Dorsolateral prefrontal cortex (tissue), 120 donors: ENCODE measurements at regions of chr3 and their contacts with region 1.

Region 1: DNA sequence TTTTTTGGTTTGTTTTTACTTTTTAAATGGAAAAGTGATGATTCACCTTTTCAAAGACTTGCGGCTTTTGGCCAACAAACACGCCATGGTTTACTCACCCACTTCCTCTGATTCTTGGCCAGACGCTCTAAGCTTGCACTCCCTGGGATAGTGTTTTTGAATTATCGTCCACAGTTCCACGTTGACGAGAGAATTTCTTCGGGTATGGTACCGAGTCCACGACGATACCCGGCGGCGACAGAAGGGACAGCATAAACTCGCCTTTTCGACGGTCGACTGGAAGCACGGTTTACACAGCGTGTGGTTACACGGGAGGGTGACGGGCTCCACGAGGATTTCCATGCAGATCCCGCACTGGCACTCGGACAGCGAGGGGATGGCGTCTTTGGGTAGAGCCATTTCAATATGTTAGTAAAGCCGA is 783 bp downstream of the RNF168 start:
- DNase-seq: peak in 9 of 10 donors; percentile 32 to 58 (median 47)
- H3K4me3 ChIP-seq: peak overlapping the region; percentile 63 to 99 (median 90)
- H3K27ac ChIP-seq: peak overlapping the region; percentile 57 to 98 (median 90)
- H3K27me3 ChIP-seq: no peaks in the 10 kb centered on the region
- CTCF ChIP-seq: peak in 1 of 56 donors; percentile 10

Region 2: DNA sequence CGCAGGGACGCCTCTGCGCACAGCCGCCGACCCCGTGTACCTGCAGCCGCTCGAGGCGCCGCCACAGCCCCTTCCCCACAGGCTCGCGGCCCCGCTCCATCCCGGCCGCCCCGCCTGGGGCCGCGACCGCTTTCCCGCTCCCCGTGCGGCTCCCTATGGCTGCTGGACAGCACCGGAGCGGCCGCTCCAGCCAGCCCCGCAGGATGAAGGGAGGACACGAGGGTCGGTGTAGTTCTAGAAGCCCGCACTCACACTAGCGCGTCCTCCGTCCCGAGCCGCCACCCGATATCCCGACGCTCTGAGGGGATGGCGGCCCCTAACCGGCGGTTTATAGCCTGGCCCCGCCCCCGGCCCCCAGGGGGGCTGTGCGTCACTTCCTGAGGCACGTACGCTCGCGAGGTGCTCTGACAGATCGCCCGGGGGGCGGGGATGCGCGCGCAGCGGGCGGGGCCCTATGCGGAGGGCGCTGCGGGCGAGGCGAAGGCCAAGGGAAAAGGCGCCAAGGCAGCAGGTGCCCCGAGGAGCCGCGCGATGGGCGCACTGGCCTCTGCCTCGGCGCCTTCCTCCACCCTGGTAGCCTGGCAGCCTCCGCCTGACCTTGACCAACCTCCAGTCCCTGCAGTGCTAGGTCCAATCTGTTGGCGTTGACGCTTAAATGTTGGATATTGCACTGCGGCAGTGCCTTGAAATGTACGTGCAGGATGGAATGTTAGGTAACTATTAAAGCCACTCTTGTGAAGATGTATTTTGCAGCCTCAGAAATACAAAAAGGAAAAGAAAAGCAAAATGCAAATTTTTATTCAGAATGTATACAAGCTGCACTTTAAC is 420.8 kb before region 1 on chr3 and contains the start of gene TFRC:
- intact Hi-C with region 1: loop called in 1 of 2 experiments (anchors 10 kb)
- DNase-seq: peak; percentile 93 to 98 (median 96)
- H3K4me3 ChIP-seq: peak within 1 kb of the TSS; percentile 80 to 100 (median 97)
- H3K27ac ChIP-seq: peak within 1 kb of the TSS; percentile 61 to 99 (median 97)
- H3K27me3 ChIP-seq: no peaks in the 10 kb centered on the region
- CTCF ChIP-seq: peak in 34 of 56 donors; percentile 5 to 61 (median 32)
- total RNA-seq, gene TFRC: 54.9 to 178 (median 99.8) TPM

Region 3: DNA sequence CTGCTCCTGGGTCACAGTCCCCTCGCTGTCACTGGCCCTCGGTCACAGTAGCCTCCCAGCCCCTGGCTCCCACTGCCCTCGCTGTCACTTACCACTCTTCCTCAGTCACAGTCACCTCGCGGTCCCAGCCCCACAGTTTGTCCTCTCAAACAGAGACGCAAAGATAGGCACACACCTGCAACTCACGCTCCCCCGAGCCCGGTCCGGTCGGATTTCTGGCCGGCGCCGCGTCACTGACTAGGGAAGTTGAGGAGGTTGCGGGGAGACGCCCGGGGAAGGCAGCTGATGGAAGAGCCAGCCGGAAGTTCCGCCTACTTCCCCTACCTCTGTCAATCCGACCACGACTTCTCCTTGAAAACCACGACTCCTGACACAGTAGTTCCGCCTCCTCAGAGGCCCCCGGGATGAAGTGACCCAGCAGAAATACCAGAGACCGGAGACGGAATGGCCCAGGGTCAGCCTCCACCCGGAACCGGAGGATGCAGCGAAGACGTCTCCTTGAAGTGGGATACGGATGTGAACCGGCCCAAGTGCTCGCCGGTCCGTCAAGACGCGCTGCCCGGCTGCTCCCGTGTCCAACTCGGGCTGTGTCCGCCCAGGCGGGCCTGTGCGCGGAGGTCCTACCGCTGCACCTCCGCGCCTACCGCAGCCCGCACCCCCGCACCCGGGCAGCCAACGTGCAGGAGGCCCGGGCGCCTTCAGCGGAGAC is 215.2 kb before region 1 on chr3 and contains the start of gene PCYT1A:
- intact Hi-C with region 1: loop called in 1 of 2 experiments (anchors 1 kb)
- DNase-seq: peak; percentile 65 to 94 (median 89)
- H3K4me3 ChIP-seq: peak within 1 kb of the TSS; percentile 65 to 98 (median 92)
- H3K27ac ChIP-seq: peak within 1 kb of the TSS; percentile 39 to 95 (median 89)
- H3K27me3 ChIP-seq: no peaks in the 10 kb centered on the region
- CTCF ChIP-seq: peak in 13 of 56 donors; percentile 2 to 52 (median 24)
- total RNA-seq, gene PCYT1A: 32.9 to 64.7 (median 46.7) TPM

Region 4: DNA sequence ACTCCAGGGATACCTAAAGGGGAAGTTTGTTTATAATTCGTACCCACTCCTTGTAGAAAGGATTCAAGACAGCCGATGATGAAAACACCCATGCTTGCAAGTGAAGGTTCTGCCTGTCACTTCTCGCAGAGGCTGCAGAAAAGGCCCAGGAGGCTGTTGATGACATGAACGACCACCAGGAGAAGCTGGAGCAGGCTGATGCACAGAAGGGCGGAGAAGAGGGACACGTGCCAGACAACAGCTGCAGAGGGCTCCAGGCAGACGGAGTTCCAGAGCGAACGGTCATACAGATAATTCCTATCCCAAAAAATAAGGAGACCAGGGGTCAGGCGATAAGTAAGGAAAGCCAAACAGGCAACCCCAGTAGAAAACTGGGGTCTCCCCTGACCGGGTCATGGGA is 179.1 kb before region 1 on chr3:
- intact Hi-C with region 1: loop called (anchors 10 kb)
- DNase-seq: no peak
- H3K4me3 ChIP-seq: no peak overlapping the region
- H3K27ac ChIP-seq: no peak overlapping the region
- H3K27me3 ChIP-seq: no peaks in the 10 kb centered on the region
- CTCF ChIP-seq: no peak

Region 5: DNA sequence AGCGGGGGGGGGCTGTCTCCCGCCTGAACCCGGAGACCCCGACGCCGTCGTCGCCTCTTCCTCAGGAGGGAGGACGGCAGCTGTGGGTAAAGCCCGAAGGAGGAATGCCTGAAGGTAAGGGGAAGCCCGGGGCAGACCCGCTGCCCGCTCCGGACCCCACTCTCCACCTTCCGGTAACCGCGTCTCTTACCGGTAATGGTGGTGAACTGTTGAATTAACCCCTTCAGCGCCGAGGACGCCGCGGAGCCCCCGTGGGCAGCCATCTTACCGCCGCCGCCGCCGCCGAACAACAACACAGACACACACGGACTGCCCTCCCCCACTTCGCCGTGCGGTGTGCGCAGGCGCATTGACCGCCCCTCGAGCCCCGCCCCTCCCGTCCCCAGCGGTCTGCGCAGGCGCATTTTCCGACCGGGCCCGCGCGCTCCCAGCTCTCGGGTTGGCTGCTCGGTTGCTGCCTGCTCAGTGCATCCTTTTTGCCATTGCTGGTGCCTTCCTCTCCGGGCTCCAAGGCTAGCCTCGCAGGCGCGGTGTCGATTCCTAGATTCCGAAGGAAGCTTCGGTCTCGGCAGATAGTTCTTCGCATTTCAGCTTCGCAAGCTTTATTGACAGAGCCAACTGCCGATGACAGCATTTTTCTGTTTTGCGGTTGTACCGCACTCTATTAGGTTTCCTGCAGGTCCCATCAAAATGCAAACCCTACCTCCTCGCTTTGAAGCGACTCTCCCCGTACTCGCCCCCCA is 70.5 kb before region 1 on chr3 and contains the start of gene UBXN7:
- intact Hi-C with region 1: loop called (anchors 5 kb)
- DNase-seq: peak; percentile 88 to 95 (median 92)
- H3K4me3 ChIP-seq: peak within 1 kb of the TSS; percentile 75 to 100 (median 97)
- H3K27ac ChIP-seq: peak within 1 kb of the TSS; percentile 65 to 99 (median 96)
- H3K27me3 ChIP-seq: no peaks in the 10 kb centered on the region
- CTCF ChIP-seq: peak in 23 of 56 donors; percentile 5 to 46 (median 21)
- total RNA-seq, gene UBXN7: 60.6 to 105 (median 78.4) TPM

Region 6: DNA sequence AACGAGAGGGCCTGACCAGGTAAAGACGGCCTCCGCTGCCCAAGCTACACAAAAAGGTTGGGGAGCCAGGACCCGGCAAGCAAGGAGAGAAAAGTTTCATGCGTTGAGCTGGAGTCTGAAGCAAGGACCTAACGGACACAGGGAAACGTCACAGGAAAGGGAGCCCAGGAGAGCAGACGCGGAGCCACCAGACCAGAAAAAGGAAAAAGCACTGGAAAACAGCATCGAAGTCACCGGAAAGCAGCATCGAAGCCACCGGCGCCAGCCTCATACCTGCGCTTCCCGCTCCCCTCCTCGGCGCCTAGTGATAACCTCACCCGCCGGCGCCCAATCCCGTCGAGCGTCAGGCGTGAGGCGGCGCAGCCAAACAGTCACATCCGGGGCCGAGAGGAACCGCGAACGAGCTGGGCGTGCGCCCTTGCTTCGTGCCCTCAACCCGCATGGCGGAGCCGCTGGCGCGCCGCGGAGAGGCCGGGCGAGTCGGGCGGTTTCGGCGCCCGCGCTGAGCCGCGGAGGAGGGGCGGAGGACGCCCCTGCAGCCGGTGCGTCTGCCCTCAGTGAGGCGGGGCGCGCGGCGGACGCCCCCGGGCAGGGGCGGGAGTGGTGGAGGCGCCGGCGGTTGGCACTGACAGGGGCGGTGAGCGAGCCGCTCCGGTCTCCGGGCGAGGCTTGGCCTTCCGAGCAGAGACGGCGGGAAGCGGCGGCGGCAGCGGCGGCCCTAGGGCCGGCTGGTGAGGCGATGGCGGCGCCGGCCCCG is 65.6 kb after region 1 on chr3 and contains the starts of genes FBXO45 and WDR53:
- intact Hi-C with region 1: loop called (anchors 2 to 5 kb)
- DNase-seq: peak; percentile 85 to 96 (median 93)
- H3K4me3 ChIP-seq: peak within 1 kb of the TSS; percentile 63 to 100 (median 94)
- H3K27ac ChIP-seq: peak within 1 kb of the TSS in 56 of 59 donors; percentile 10 to 91 (median 77)
- H3K27me3 ChIP-seq: no peaks in the 10 kb centered on the region
- CTCF ChIP-seq: peak in 43 of 56 donors; percentile 7 to 65 (median 38)
- total RNA-seq, gene FBXO45: 12.3 to 28.8 (median 20.8) TPM
- total RNA-seq, gene WDR53: 6.0 to 19.1 (median 12.3) TPM